Spleen (tissue), 13 donors: ENCODE measurements at regions of chr14 and their contacts with region 1.

Region 1: DNA sequence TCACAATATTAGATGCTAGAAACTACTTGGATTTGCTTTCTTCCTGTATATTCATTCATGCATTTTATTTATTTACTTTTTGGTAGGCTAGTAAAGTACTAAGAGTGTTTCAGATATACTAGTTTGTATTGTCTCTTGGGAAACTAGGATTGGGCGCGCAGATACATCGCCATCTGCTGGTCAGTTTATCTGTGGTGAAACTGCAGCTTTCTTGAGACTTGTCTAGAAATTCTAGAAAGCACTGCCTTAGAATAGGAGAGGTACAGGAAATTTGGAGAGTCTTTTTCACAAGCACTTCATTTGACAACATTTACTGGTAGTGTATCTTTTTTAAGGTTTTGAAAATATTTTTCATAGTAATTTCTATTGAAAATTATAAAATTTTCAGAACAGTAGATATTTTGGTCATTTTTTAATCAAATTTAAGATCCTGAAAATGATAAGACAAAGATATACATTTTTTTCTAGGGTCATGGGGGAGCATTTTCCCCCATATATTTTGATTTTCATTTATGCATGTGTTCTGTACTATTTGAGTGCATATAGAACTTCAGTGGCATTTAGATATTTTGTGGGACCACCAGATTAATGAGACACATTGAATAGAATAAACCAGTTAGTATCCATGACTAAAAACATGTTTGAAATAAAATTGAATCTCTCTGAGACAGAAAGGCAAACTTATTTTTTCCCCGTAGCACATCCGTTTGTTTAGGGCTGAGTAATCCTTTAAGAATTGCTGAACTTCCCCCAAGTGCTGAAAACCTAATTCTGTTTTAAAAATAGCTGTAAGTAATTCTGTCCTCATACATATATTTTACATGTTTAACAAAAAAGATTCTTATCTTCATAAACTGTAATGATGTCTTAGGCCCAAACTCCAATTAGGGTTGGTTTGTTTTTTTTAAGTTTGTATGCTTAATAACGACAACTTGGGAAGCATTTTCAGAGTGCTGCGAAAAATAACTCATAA is 44.5 kb downstream of the SLC38A6 start:
- DNase-seq: peak; percentile 70
- H3K4me3 ChIP-seq: no peak overlapping the region
- H3K27ac ChIP-seq: no peak overlapping the region
- H3K4me1 ChIP-seq: no peaks in the 10 kb centered on the region
- H3K27me3 ChIP-seq: no peaks in the 10 kb centered on the region
- CTCF ChIP-seq: peak in 10 of 11 experiments; percentile 43 to 87 (median 76)
- POLR2A ChIP-seq: no peak

Region 2: GRCh38 chr14:60622917-60623257 is 402.6 kb before region 1 on chr14:
- intact Hi-C with region 1: loop called (anchors 2 kb)
- DNase-seq: no peak
- H3K4me3 ChIP-seq: no peak overlapping the region
- H3K27ac ChIP-seq: no peak overlapping the region
- H3K4me1 ChIP-seq: no peaks in the 10 kb centered on the region
- H3K27me3 ChIP-seq: peaks cover 0 to 33% (median 0%) of the 10 kb centered on the region in 7 donors
- CTCF ChIP-seq: no peak
- POLR2A ChIP-seq: no peak

Region 3: DNA sequence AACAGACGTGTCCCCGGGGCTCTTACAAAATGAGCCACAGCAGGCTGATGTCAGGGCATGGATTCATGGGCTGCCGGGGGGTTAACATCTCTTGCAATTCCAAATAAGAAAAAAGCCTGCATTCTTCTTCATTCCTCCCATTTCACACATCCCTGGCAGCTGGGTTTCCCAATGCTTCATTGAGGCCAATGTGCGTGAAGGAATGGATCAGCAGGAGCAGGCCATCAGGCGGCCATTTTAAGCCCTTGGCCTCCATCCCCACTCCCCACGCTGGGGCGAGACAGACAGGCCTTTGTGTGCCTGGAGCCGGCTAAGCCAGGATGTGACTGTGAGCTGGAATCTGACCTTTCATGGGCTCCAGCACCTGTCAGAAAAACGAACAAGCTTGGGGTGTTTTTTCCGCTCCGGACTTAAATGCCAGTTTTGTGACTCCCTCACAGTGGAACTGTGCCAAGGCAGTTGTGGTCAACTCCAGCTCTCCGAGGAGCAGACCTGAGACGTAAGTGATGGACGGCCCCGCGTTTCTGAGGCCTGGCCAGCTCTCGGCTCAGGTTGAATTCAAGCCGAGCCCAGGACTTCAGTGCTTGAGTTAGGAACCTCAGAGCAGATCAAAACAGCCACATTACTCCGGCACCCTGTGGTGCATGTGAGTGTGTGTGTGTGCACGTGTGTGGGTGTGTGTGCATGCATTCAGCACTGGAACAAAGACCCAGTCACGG is 122.5 kb after region 1 on chr14:
- intact Hi-C with region 1: no loop called
- DNase-seq: no peak
- H3K4me3 ChIP-seq: no peak overlapping the region
- H3K27ac ChIP-seq: no peak overlapping the region
- H3K4me1 ChIP-seq: no peaks in the 10 kb centered on the region
- H3K27me3 ChIP-seq: no peaks in the 10 kb centered on the region
- CTCF ChIP-seq: no peak
- POLR2A ChIP-seq: no peak